Endothelial cell of umbilical vein (primary cell): ENCODE measurements at regions of chr13 and their contacts with region 1.

Region 1: GRCh38 chr13:64471916-64472315 is 2758.2 kb downstream of the PCDH9 start:
- DNase-seq: peak; percentile 66
- H3K4me3 ChIP-seq: no peak overlapping the region
- H3K27ac ChIP-seq: no peak overlapping the region
- H3K4me1 ChIP-seq: no peaks in the 10 kb centered on the region
- H3K27me3 ChIP-seq: no peaks in the 10 kb centered on the region
- CTCF ChIP-seq: peak in 1 of 2 donors; percentile 22
- POLR2A ChIP-seq: no peak

Region 2: GRCh38 chr13:65638572-65639168 is 1166.8 kb after region 1 on chr13:
- CTCF ChIA-PET with region 1: interaction called, 83 read pairs
- POLR2A ChIA-PET with region 1: no interaction called
- dilution Hi-C with region 1: no loop called
- intact Hi-C with region 1: loop called (anchors 1 kb)
- DNase-seq: peak; percentile 51
- H3K4me3 ChIP-seq: no peak overlapping the region
- H3K27ac ChIP-seq: no peak overlapping the region
- H3K4me1 ChIP-seq: no peaks in the 10 kb centered on the region
- H3K27me3 ChIP-seq: no peaks in the 10 kb centered on the region
- CTCF ChIP-seq: peak; percentile 54 to 66
- POLR2A ChIP-seq: no peak

Region 3: DNA sequence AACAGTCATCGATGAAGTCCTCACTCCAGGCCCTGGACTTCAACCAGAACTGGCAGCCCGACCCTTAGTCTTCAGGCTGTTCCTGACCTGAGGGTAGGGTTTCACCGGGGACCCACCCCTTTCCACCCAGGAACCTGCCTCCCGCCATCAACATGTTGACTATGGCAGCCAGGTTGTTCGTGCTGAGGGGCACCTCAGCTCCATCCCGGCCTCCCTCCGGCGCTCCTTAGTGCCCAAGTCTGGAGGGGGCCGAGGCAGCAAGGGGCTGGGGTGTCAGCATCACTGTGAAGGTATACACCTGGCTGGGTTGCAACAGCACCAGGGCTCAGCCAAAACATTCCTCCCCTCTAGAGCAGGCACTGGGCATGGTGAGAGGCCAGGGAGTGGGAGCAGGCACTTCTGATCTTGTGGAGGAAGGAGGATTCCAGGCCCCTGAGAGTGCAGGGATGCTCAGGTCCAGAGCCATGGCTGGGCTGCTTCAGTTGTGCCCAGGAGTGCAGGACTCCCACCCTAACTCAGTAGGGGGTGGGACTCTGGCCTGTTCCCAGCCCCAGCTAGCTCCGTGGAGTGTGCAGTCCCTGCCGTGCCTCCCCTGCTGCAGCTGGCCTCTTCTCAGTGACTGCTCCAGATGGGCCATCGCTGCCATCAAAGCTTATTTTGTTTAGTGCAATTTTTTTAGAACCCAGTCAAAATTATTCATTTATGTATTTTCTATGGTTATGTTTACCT is 1312.3 kb after region 1 on chr13:
- CTCF ChIA-PET with region 1: no interaction called
- POLR2A ChIA-PET with region 1: no interaction called
- dilution Hi-C with region 1: no loop called
- intact Hi-C with region 1: no loop called
- DNase-seq: no peak
- H3K4me3 ChIP-seq: no peak overlapping the region
- H3K27ac ChIP-seq: no peak overlapping the region
- H3K4me1 ChIP-seq: no peaks in the 10 kb centered on the region
- H3K27me3 ChIP-seq: no peaks in the 10 kb centered on the region
- CTCF ChIP-seq: no peak
- POLR2A ChIP-seq: no peak